ENCODE measurements at regions of chr19 and their contacts with region 1.

Region 1: GRCh38 chr19:8355631-8356402 is 8.1 kb upstream of the ANGPTL4 start:
- DNase-seq: no peak
- H3K4me3 ChIP-seq: no peak overlapping the region
- H3K27ac ChIP-seq: no peak overlapping the region
- H3K4me1 ChIP-seq: no peaks in the 10 kb centered on the region
- H3K27me3 ChIP-seq: no peaks in the 10 kb centered on the region
- CTCF ChIP-seq: no peak
- POLR2A ChIP-seq: no peak

Region 2: DNA sequence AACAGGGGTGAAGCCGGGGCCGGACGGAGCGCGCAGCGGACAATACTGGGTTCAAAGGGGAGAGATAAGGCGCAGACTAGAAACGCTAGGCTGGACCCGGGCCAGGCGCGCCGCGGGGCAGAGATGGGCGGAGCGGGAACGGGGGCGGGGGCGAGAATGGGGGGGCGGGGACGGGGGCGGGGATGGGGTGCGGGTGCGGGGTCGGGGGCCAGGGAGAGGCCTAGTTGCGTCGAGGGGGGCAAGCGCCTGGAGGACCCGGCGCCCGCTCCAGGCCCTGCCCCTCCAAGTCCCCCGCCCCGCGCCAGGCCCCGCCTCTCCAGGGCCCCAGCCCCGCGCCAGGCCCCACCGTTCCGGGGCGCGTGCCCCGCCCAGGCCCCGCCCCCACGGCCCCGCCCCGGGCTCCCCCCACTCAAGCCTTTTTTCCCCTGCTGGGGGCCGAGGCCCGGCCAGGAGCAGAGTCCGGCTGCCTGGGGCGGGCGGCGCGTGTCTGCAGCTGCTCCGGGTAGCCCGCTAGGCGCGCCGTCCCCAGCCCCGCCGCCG is 146.8 kb before region 1 on chr19 and contains the start of gene CERS4:
- intact Hi-C with region 1: no loop called
- DNase-seq: peak; percentile 76
- H3K4me3 ChIP-seq: peak within 1 kb of the TSS; percentile 82 to 98
- H3K27ac ChIP-seq: peak within 1 kb of the TSS; percentile 92 to 93
- H3K4me1 ChIP-seq: peaks cover 15% of the 10 kb centered on the region
- H3K27me3 ChIP-seq: no peaks in the 10 kb centered on the region
- CTCF ChIP-seq: no peak
- POLR2A ChIP-seq: no peak
- total RNA-seq, gene CERS4: 170 to 176 TPM

Region 3: GRCh38 chr19:8505680-8506401 is 150.0 kb after region 1 on chr19:
- intact Hi-C with region 1: loop called (anchors 10 kb)
- DNase-seq: peak; percentile 84
- H3K4me3 ChIP-seq: peak overlapping the region; percentile 41 to 42
- H3K27ac ChIP-seq: peak overlapping the region; percentile 53 to 57
- H3K4me1 ChIP-seq: peaks cover 3% of the 10 kb centered on the region
- H3K27me3 ChIP-seq: no peaks in the 10 kb centered on the region
- CTCF ChIP-seq: peak; percentile 85 to 96 (median 90)
- POLR2A ChIP-seq: peak; percentile 16

Measured in prostate gland (tissue), 2 donors.